ENCODE measurements at regions of chr2 and their contacts with region 1.

Region 1: DNA sequence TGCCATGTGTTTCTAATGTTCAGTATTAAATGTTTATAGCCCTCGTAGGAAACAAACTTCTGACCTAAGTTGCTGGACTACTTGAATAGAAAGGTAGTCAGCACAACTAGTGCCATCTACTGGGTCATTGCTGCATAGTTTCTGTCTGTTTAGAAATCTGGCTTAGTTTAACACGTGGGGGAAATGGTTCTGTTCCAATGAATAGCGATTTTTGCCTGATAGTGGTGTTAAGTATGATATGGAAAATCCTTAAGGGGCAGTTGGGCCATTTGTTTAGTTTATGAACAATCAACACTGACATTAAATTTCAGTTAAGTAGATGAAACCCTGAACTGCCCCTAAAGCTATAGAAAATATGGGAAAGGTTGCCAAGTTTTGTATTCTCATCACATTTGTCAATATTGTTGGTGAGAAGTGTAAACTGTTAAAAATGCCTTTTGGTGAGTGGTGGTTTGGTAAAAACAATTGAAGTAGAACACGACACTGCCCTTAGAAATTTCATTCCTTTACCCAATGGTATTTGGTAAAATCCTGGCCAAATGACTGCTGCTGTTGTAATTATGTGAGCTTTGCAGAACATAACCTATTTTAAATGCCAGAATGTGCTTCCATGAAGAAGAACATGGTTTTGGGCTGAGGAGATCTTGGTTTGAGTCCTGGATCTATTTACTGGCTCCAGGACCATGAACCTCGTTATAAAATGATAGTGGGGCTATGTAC is 13.2 kb downstream of the NABP1 start:
- DNase-seq: peak in 1 of 2 donors; percentile 41
- ATAC-seq: peak; percentile 77

Region 2: GRCh38 chr2:191560411-191560980 is 130.7 kb before region 1 on chr2:
- intact Hi-C with region 1: loop called in 1 of 2 experiments (anchors 5 kb)
- DNase-seq: no peak
- ATAC-seq: no peak